ENCODE measurements at regions of chr1 and their contacts with region 1.

Region 1: DNA sequence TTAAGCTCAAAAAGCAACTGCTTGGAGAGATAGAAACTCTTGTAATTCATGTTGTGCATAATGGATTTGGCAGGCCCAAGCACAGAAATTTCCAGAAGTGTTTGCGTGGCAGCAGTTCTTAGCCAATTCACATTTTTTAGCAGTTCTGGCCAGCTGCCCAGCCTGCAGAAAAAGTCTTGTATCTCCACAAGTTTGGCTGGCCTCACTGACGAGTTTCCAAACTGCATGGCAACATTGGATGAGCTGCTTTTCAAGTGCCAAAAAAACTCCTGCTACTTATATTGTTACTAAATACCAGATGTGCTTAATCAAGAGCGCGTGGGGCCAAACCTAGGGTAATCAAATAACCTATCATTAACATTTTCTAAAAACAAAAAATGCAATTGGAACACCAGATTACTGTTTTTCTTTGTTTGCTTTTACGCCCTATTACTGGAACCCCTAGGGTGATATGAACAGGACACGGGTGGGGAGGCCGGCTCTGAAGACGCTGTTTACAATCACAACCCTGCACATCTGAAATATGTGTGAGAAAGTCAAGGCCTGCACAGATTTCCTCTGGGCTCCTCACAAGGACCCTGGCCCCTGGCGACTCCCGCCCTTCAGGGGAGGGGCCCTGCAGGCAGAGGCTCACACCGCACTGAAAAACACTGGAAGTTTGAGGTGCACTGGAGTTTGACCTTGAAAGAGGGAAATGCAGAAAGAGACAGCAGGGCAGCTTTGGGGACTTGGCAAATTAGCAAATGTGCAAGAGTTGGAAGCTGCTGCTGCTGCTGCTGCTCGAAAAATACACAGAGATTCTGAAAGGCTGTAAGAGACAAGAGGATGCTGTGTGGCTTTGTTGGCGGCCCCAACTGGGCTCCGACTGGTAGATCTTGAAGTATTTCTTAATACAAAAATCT is 55.2 kb upstream of the TARBP1 start:
- DNase-seq: peak; percentile 93 to 97 (median 94)
- ATAC-seq: peak; percentile 7 to 19 (median 16)
- H3K4me3 ChIP-seq: peak overlapping the region in 1 of 12 donors; percentile 13
- H3K27ac ChIP-seq: peak overlapping the region; percentile 91 to 99 (median 98)
- H3K4me1 ChIP-seq: peaks cover 35 to 100% (median 98%) of the 10 kb centered on the region in 12 donors
- H3K27me3 ChIP-seq: no peaks in the 10 kb centered on the region
- CTCF ChIP-seq: no peak
- POLR2A ChIP-seq: no peak

Region 2: GRCh38 chr1:234579967-234580366 is 45.7 kb after region 1 on chr1:
- intact Hi-C with region 1: loop called in 2 of 10 experiments (anchors 5 kb)
- DNase-seq: no peak
- ATAC-seq: no peak
- H3K4me3 ChIP-seq: no peak overlapping the region
- H3K27ac ChIP-seq: no peak overlapping the region
- H3K4me1 ChIP-seq: peaks cover 4 to 37% (median 23%) of the 10 kb centered on the region in 12 donors
- H3K27me3 ChIP-seq: no peaks in the 10 kb centered on the region
- CTCF ChIP-seq: peak in 2 of 12 donors; percentile 4 to 21
- POLR2A ChIP-seq: no peak

Region 3: DNA sequence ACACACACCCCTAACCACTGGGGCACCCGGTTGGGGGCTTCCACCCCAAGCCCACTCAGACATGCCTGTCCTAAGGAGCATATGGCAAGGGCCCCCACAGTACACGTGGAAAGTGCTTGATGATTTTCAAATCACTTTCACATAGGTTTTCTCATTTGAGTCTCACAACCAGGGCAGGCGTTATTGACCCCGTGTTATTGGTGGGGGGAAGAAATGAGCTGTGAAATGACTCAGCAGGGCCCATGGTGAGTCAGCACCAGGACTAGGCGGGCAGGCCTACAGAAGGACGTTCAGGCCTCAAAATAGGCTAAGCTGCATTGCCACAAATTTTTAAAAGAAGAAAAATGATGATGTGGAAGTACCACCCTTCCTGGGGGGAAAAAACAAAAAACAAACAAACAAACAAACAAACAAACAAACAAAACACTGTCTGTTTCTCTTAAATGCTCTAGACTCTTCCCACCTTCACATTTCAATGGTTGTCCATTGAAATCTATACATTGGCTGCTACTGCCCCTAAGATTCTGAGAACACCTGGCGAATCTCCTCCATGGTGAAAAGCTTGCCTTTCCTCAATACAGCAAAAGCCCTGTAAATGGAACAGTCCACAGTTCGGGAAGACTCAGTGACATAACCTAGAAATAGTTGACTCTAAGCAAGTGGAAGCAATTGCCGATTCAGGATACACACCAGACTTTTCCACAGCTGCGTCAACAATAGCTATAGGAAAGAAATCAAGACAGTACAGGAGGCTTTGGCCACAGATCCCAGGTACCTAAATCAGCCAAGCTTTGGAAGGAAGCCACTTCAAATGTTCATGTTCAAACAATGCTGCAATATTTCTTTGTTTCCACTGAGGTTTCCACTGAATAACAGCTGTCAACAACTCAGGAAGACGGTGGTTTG is 359.8 kb after region 1 on chr1:
- intact Hi-C with region 1: loop called in 1 of 10 experiments (anchors 10 kb)
- DNase-seq: no peak
- ATAC-seq: peak in 2 of 4 donors; percentile 13 to 44
- H3K4me3 ChIP-seq: no peak overlapping the region
- H3K27ac ChIP-seq: peak overlapping the region in 11 of 12 donors; percentile 21 to 68 (median 42)
- H3K4me1 ChIP-seq: peaks cover 2 to 48% (median 31%) of the 10 kb centered on the region in 12 donors
- H3K27me3 ChIP-seq: no peaks in the 10 kb centered on the region
- CTCF ChIP-seq: no peak
- POLR2A ChIP-seq: no peak

Measured in heart left ventricle (tissue), 16 donors.